CD4-positive, alpha-beta T cell (primary cell): ENCODE measurements at regions of chr4 and their contacts with region 1.

Region 1: GRCh38 chr4:142126890-142127497 is 490.6 kb downstream of the IL15 start:
- DNase-seq: peak; percentile 35 to 83 (median 57)
- ATAC-seq: peak; percentile 80
- H3K4me3 ChIP-seq: no peak overlapping the region
- H3K4me3 Mint-ChIP-seq: no peak overlapping the region
- H3K27ac ChIP-seq: no peak overlapping the region
- H3K27ac Mint-ChIP-seq: peak overlapping the region; percentile 6
- H3K4me1 ChIP-seq: peaks cover 8% of the 10 kb centered on the region
- H3K4me1 Mint-ChIP-seq: peaks cover 33% of the 10 kb centered on the region
- H3K27me3 ChIP-seq: no peaks in the 10 kb centered on the region
- H3K27me3 Mint-ChIP-seq: no peaks in the 10 kb centered on the region
- CTCF ChIP-seq: peak; percentile 85

Region 2: DNA sequence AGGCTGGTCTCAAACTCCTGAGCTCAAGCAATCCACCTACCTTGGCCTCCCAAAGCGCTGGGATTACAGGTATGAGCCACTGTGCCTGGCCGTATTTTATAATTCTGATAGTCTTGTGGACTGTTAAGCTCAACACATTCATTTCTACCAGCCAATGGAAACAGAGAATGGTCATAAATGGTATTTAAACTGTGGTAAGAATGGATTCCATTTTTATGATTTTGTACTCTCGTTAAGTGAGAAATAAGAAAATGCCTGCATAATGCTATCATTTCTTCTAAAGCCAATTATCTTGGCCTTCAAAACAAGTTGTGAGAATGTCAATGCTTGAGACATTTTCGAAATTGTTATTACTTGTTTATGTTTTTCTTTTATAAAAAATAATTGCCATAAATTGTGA is 169.6 kb before region 1 on chr4:
- CTCF ChIA-PET with region 1: no interaction called
- POLR2A ChIA-PET with region 1: no interaction called
- intact Hi-C with region 1: no loop called
- DNase-seq: no peak
- ATAC-seq: no peak
- H3K4me3 ChIP-seq: no peak overlapping the region
- H3K4me3 Mint-ChIP-seq: no peak overlapping the region
- H3K27ac ChIP-seq: no peak overlapping the region
- H3K27ac Mint-ChIP-seq: no peak overlapping the region
- H3K4me1 ChIP-seq: no peaks in the 10 kb centered on the region
- H3K4me1 Mint-ChIP-seq: no peaks in the 10 kb centered on the region
- H3K27me3 ChIP-seq: peaks cover 0 to 5% of the 10 kb centered on the region in 2 experiments
- H3K27me3 Mint-ChIP-seq: peaks cover 19% of the 10 kb centered on the region
- CTCF ChIP-seq: no peak

Region 3: DNA sequence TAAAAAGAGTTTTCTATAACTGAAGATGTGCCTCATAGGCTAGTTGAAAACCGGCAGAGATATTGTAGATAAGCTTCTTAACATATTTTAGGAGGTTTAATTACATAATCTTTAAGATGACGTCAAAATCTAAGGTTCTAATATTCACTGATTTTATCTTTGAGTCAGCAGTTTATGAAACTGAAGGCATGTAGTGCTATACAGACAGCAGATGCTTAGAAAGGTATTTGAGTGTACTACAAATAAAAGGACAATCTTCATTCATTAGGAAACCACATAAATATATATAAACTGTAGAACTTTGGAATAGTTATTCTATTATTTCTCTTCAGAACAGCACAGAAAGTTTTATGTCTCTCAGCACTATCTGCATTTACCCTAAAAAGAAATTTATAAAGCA is 14.2 kb after region 1 on chr4:
- CTCF ChIA-PET with region 1: no interaction called
- POLR2A ChIA-PET with region 1: no interaction called
- intact Hi-C with region 1: no loop called
- DNase-seq: no peak
- ATAC-seq: no peak
- H3K4me3 ChIP-seq: no peak overlapping the region
- H3K4me3 Mint-ChIP-seq: no peak overlapping the region
- H3K27ac ChIP-seq: no peak overlapping the region
- H3K27ac Mint-ChIP-seq: peak overlapping the region; percentile 74
- H3K4me1 ChIP-seq: no peaks in the 10 kb centered on the region
- H3K4me1 Mint-ChIP-seq: peaks cover 44% of the 10 kb centered on the region
- H3K27me3 ChIP-seq: no peaks in the 10 kb centered on the region
- H3K27me3 Mint-ChIP-seq: no peaks in the 10 kb centered on the region
- CTCF ChIP-seq: no peak

Region 4: GRCh38 chr4:142274137-142274536 is 147.1 kb after region 1 on chr4:
- CTCF ChIA-PET with region 1: no interaction called
- POLR2A ChIA-PET with region 1: no interaction called
- intact Hi-C with region 1: loop called in 1 of 2 experiments (anchors 10 kb)
- DNase-seq: no peak
- ATAC-seq: no peak
- H3K4me3 ChIP-seq: no peak overlapping the region
- H3K4me3 Mint-ChIP-seq: no peak overlapping the region
- H3K27ac ChIP-seq: no peak overlapping the region
- H3K27ac Mint-ChIP-seq: peak overlapping the region; percentile 63
- H3K4me1 ChIP-seq: no peaks in the 10 kb centered on the region
- H3K4me1 Mint-ChIP-seq: peaks cover 79% of the 10 kb centered on the region
- H3K27me3 ChIP-seq: no peaks in the 10 kb centered on the region
- H3K27me3 Mint-ChIP-seq: no peaks in the 10 kb centered on the region
- CTCF ChIP-seq: no peak

Region 5: GRCh38 chr4:142435599-142436235 is 308.7 kb after region 1 on chr4:
- CTCF ChIA-PET with region 1: no interaction called
- POLR2A ChIA-PET with region 1: no interaction called
- intact Hi-C with region 1: loop called in 1 of 2 experiments (anchors 10 kb)
- DNase-seq: no peak
- ATAC-seq: no peak
- H3K4me3 ChIP-seq: no peak overlapping the region
- H3K4me3 Mint-ChIP-seq: no peak overlapping the region
- H3K27ac ChIP-seq: no peak overlapping the region
- H3K27ac Mint-ChIP-seq: no peak overlapping the region
- H3K4me1 ChIP-seq: no peaks in the 10 kb centered on the region
- H3K4me1 Mint-ChIP-seq: peaks cover 20% of the 10 kb centered on the region
- H3K27me3 ChIP-seq: no peaks in the 10 kb centered on the region
- H3K27me3 Mint-ChIP-seq: no peaks in the 10 kb centered on the region
- CTCF ChIP-seq: no peak

Region 6: DNA sequence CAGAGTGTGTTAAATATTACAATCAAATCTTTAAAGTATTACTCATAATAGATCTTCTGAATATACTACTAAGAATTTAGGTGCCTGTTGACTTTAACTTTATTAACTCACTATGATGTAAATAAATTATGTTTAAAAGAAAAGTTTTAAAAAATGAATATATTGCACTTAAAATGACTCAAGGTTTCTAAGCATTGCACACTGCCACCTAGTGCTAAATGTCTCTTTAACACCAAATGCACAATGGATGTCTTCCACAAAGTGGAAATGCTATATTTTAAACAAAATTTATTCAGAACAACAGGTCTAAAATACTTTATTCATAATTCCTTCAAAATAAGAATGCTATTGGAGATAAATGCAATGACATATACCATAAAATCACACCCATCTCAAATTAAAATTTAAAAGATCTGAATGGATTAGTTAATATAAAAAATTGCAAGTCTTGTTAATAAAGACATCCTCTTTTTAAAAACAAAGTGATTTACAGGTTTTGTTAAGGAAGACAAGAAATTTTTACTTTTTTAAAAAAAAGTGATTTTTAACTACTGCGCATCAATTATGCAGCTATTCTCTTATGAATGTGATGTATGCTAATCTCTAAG is 713.6 kb after region 1 on chr4:
- CTCF ChIA-PET with region 1: interaction called, 7 read pairs
- POLR2A ChIA-PET with region 1: interaction called, 3 read pairs
- intact Hi-C with region 1: loop called in 1 of 2 experiments (anchors 1 kb)
- DNase-seq: peak in 4 of 14 experiments; percentile 16 to 68 (median 56)
- ATAC-seq: no peak
- H3K4me3 ChIP-seq: no peak overlapping the region
- H3K4me3 Mint-ChIP-seq: no peak overlapping the region
- H3K27ac ChIP-seq: no peak overlapping the region
- H3K27ac Mint-ChIP-seq: no peak overlapping the region
- H3K4me1 ChIP-seq: peaks cover 6% of the 10 kb centered on the region
- H3K4me1 Mint-ChIP-seq: peaks cover 14% of the 10 kb centered on the region
- H3K27me3 ChIP-seq: peaks cover 0 to 6% of the 10 kb centered on the region in 2 experiments
- H3K27me3 Mint-ChIP-seq: peaks cover 6% of the 10 kb centered on the region
- CTCF ChIP-seq: peak; percentile 73